H1 (cell line): ENCODE measurements at regions of chr13 and their contacts with region 1.

Region 1: DNA sequence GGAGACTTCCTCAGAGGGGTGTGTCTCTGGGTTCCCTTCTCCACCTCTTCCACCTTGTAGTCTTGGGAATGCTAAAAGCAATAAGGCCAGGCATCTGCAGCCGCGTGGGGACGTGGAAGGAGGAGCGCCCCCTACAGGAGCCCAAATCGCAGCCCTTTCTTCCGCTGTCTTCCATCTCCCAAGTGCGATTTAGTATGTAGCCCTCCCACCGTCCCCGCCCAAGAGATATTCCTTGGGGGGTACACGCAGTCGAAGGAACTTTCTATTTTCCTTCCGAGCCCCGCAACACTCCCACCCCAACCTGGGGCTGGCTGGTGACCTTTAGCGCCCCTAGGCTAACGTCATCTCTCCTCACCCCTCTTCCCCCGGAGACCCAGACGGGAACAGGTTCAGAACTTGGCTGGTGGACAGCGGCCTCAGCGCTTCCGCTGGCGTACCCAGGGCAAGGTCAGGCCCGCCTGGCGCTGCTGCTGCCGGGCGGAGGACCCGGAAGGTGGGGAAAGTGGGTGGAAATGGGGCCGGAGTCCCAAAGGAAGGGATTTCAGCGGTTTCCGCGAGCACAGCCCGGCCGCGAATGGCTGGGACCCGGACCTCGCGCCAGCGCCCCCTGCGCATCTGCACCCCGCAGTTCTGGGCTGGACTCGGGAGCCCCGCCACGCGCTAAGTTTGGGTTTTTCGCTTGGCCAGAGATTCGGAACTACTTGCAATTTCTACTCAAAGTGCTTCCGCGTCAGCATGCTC is 2.1 kb upstream of the PCDH8 start:
- DNase-seq: peak; percentile 72 to 94
- H3K4me3 ChIP-seq: peak overlapping the region; percentile 69 to 84 (median 74)
- H3K27ac ChIP-seq: peak overlapping the region; percentile 77; the same call in 1 of the 2 replicates
- H3K4me1 ChIP-seq: peaks cover 4 to 35% (median 25%) of the 10 kb centered on the region in 4 experiments
- H3K27me3 ChIP-seq: peaks cover 39 to 49% (median 45%) of the 10 kb centered on the region in 4 experiments
- CTCF ChIP-seq: peak in 2 of 3 experiments; percentile 70 to 86; a peak in 3 of 4 replicates
- EP300 ChIP-seq: no peak
- POLR2A ChIP-seq: no peak; a peak in 1 of 3 replicates
- RAD21 ChIP-seq: peak; percentile 25 to 42; a peak in 3 of 4 replicates

Region 2: DNA sequence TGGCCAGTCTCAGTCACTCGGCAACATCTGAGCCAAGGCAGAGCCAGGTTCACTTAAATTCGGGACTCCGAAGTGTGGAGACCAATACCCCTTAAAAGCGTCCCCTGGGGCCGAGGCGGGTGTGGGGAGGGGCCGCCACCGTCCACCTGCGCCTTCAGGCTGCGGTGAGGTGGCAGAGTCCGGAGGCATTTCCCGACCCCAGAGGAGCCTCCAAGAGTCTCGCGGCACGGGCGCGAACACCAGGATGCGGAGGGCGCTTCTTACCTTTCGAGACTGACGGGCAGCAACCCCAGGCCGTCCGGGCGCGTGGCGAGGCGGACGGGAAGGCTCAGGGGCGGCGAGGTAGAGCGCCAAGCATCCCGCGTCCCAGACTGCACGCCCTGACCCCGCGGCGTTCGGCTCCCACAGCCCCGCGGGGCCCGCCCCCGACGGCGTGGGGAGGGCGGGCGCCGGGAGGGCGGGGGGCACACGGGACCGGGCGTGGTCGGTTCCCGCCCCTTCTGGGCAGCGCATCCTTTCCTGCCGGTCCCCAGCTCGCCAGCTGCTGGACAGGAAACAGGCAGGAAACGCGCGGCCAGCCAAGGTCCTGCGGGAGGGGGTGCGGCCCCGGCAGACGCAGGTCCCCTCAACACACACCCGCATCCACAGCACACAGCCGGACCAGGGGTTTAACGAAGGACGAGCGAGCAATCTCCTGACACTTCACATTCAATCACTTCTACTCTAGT is 444.6 kb before region 1 on chr13 and contains the start of gene THSD1:
- CTCF ChIA-PET with region 1: no interaction called
- POLR2A ChIA-PET with region 1: no interaction called
- DNase-seq: peak in 1 of 2 experiments; percentile 65
- H3K4me3 ChIP-seq: peak within 1 kb of the TSS; percentile 47 to 74 (median 58)
- H3K27ac ChIP-seq: no peak within 1 kb of the TSS
- H3K4me1 ChIP-seq: peaks cover 0 to 5% (median 2%) of the 10 kb centered on the region in 4 experiments; a peak in 2 of 7 replicates
- H3K27me3 ChIP-seq: peaks cover 3 to 30% (median 16%) of the 10 kb centered on the region in 4 experiments; a peak in 6 of 7 replicates
- CTCF ChIP-seq: no peak
- EP300 ChIP-seq: no peak
- POLR2A ChIP-seq: no peak
- RAD21 ChIP-seq: no peak
- total RNA-seq, gene THSD1: 0.23 and 0.35 TPM in 2 replicates

Region 3: GRCh38 chr13:52665325-52665724 is 185.2 kb before region 1 on chr13:
- CTCF ChIA-PET with region 1: interaction called, 14 read pairs
- POLR2A ChIA-PET with region 1: no interaction called
- DNase-seq: no peak
- H3K4me3 ChIP-seq: no peak overlapping the region
- H3K27ac ChIP-seq: no peak overlapping the region
- H3K4me1 ChIP-seq: no peaks in the 10 kb centered on the region
- H3K27me3 ChIP-seq: no peaks in the 10 kb centered on the region
- CTCF ChIP-seq: peak in 2 of 3 experiments; percentile 23 to 37; a peak in 2 of 4 replicates
- EP300 ChIP-seq: no peak
- POLR2A ChIP-seq: no peak
- RAD21 ChIP-seq: peak in 1 of 2 experiments; percentile 54; a peak in 3 of 4 replicates

Region 4: GRCh38 chr13:52738719-52739467 is 111.7 kb before region 1 on chr13:
- CTCF ChIA-PET with region 1: interaction called, 10 read pairs
- POLR2A ChIA-PET with region 1: interaction called, 4 read pairs
- DNase-seq: peak in 1 of 2 experiments; percentile 82
- H3K4me3 ChIP-seq: peak overlapping the region; percentile 63 to 76 (median 69)
- H3K27ac ChIP-seq: peak overlapping the region; percentile 53; the same call in 1 of the 2 replicates
- H3K4me1 ChIP-seq: peaks cover 3 to 20% (median 18%) of the 10 kb centered on the region in 4 experiments
- H3K27me3 ChIP-seq: no peaks in the 10 kb centered on the region
- CTCF ChIP-seq: peak; percentile 63 to 94 (median 65)
- EP300 ChIP-seq: no peak; a peak in 1 of 3 replicates
- POLR2A ChIP-seq: peak in 1 of 2 experiments; percentile 59; a peak in 2 of 3 replicates
- RAD21 ChIP-seq: peak; percentile 27 to 66

Region 5: DNA sequence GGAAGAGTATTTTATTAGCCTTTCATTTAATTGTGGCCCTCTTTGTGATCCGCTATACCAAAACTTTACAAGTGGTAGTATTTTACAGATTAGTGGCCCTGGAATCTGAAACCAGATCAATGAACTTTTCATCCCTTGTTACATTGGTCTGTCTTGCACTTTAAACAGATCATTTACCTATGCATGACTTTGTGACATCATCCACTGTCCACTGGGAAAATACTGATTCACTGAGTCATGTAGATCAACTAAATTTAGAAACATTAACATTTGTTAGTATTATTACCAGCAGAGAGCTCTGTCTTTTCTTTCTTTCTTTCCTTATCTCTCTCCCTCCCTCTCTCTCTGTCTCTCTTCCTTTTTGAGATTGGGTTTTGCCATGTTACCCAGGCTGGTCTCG is 19.6 kb before region 1 on chr13:
- CTCF ChIA-PET with region 1: interaction called, 43 read pairs
- POLR2A ChIA-PET with region 1: interaction called, 5 read pairs
- DNase-seq: no peak
- H3K4me3 ChIP-seq: no peak overlapping the region
- H3K27ac ChIP-seq: no peak overlapping the region
- H3K4me1 ChIP-seq: peaks cover 0 to 12% (median under 1%) of the 10 kb centered on the region in 4 experiments; a peak in 3 of 7 replicates
- H3K27me3 ChIP-seq: no peaks in the 10 kb centered on the region
- CTCF ChIP-seq: no peak
- EP300 ChIP-seq: no peak
- POLR2A ChIP-seq: no peak
- RAD21 ChIP-seq: no peak

Region 6: GRCh38 chr13:52868190-52868589 is 17.6 kb after region 1 on chr13:
- CTCF ChIA-PET with region 1: interaction called, 177 read pairs
- POLR2A ChIA-PET with region 1: interaction called, 10 read pairs
- DNase-seq: no peak
- H3K4me3 ChIP-seq: no peak overlapping the region
- H3K27ac ChIP-seq: no peak overlapping the region
- H3K4me1 ChIP-seq: peaks cover 0 to 5% (median 2%) of the 10 kb centered on the region in 4 experiments; a peak in 2 of 7 replicates
- H3K27me3 ChIP-seq: 0 out of 7 replicates have a peak, but pooled peaks cover 0 to 2% (median 0%) of the 10 kb centered on the region in 4 experiments
- CTCF ChIP-seq: no peak
- EP300 ChIP-seq: no peak
- POLR2A ChIP-seq: no peak
- RAD21 ChIP-seq: no peak

Region 7: GRCh38 chr13:52925775-52926285 is 75.3 kb after region 1 on chr13:
- CTCF ChIA-PET with region 1: interaction called, 10 read pairs
- POLR2A ChIA-PET with region 1: interaction called, 3 read pairs
- DNase-seq: no peak
- H3K4me3 ChIP-seq: no peak overlapping the region
- H3K27ac ChIP-seq: no peak overlapping the region
- H3K4me1 ChIP-seq: peaks cover 0 to 4% (median 0%) of the 10 kb centered on the region in 4 experiments; a peak in 3 of 7 replicates
- H3K27me3 ChIP-seq: no peaks in the 10 kb centered on the region
- CTCF ChIP-seq: no peak
- EP300 ChIP-seq: no peak
- POLR2A ChIP-seq: no peak
- RAD21 ChIP-seq: no peak

Region 8: GRCh38 chr13:53191091-53191490 is 340.5 kb after region 1 on chr13:
- CTCF ChIA-PET with region 1: interaction called, 14 read pairs
- POLR2A ChIA-PET with region 1: no interaction called
- DNase-seq: peak in 1 of 2 experiments; percentile 51
- H3K4me3 ChIP-seq: no peak overlapping the region
- H3K27ac ChIP-seq: no peak overlapping the region
- H3K4me1 ChIP-seq: peaks cover 0 to 6% (median 5%) of the 10 kb centered on the region in 4 experiments; a peak in 3 of 7 replicates
- H3K27me3 ChIP-seq: no peaks in the 10 kb centered on the region
- CTCF ChIP-seq: no peak
- EP300 ChIP-seq: no peak
- POLR2A ChIP-seq: no peak
- RAD21 ChIP-seq: no peak